ENCODE measurements at regions of chr1 and their contacts with region 1.

Region 1: DNA sequence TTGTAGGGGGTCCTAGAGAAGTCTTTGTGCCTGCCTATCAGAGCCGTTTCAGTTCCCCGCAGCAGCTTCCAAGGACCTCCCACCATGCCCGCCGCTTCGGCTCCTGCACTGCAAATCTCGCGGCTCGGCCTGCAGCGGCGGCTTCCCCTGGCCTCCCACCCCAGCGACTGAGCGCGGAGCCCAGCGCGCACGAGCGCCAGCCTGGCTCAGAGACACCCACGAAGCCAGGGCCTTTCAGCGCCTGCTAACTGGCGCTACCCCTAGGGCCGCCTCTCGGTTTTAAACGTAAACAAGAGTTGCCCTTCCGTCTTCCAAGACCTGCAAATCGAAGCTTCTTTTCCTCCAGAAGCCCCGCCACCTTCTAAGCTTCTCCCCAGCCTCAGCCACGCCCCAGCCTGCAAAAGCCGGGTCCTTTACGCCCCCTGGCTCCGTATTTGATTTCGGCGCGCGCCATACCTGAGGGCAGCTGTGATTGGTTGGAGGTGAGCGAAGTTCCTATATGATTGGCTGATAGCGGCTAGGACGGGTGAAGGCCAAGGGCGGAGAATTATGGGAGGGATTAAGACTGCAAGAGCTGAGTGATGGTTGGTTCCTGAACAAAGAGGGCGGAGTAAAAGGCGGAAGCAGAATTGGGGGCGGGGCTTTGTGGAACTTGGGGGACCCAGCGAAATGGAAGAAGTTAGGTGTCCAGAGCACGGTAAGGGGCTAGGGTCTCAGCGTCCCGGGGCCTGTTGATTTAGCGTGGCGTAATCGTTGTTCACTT is at the start of gene TTF2:
- DNase-seq: peak; percentile 99
- ATAC-seq: peak; percentile 96
- H3K4me3 ChIP-seq: peak within 1 kb of the TSS; percentile 90 to 95
- H3K27ac ChIP-seq: peak within 1 kb of the TSS; percentile 85
- H3K4me1 ChIP-seq: peaks cover 4 to 15% of the 10 kb centered on the region in 2 experiments; a peak in 3 of 4 replicates
- H3K27me3 ChIP-seq: no peaks in the 10 kb centered on the region
- CTCF ChIP-seq: no peak
- POLR2A ChIP-seq: peak; percentile 62
- RAD21 ChIP-seq: no peak
- total RNA-seq, gene TTF2: 60.3 TPM

Region 2: GRCh38 chr1:116151739-116152576 is 907.9 kb before region 1 on chr1:
- CTCF ChIA-PET with region 1: no interaction called
- POLR2A ChIA-PET with region 1: no interaction called
- RAD21 ChIA-PET with region 1: no interaction called
- intact Hi-C with region 1: loop called (anchors 10 kb)
- DNase-seq: peak; percentile 26
- ATAC-seq: peak; percentile 98
- H3K4me3 ChIP-seq: peak overlapping the region; percentile 45 to 59
- H3K27ac ChIP-seq: peak overlapping the region; percentile 58; the same call in 1 of the 2 replicates
- H3K4me1 ChIP-seq: peaks cover 0 to 13% of the 10 kb centered on the region in 2 experiments; a peak in 2 of 4 replicates
- H3K27me3 ChIP-seq: no peaks in the 10 kb centered on the region
- CTCF ChIP-seq: peak; percentile 73 to 91 (median 89)
- POLR2A ChIP-seq: peak; percentile 25
- RAD21 ChIP-seq: peak; percentile 85

Region 3: DNA sequence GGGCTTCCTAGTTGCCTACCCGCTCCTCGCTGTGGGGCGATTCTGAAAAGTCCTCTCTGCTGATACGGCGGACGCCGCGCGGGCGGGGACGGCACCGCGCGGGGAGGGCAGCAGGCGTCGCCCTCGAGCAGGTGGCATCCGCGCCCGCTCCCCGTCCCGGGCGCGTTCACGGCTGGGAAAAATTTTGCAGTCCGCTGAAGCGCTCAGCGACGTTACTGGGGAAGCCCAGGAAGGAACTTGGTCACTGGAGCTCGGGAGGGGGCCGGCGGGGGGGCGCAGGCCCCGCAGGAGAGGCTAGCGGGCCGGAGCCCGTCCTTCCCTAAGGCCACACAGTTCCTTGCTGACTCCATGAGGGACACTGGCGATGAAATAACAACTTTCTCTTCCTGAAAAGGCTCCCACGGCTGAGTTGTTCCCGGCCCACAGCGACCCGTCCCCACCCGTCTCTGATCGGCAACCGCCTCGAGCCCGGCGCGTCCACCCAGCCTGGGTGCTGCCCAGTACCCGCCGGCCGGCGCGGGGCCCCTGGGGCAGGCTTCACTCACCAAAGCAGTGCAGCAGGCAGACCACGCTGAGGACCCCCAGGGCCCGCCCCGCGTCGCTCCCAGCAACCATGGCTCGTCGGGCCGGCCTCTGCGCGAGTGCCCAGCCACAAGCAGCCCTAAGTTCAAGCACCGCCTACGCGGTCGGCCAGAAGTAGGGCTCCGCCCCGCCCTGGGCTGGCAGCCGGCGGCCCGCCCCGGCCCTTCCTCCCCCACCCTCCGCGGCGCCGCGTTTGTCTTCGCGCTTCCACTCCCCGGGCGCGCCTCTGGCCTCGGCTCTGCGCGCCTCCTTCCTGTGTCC is 489.3 kb before region 1 on chr1 and contains the start of gene CD58:
- CTCF ChIA-PET with region 1: interaction called, 5 read pairs
- POLR2A ChIA-PET with region 1: no interaction called
- RAD21 ChIA-PET with region 1: no interaction called
- intact Hi-C with region 1: loop called (anchors 1 kb)
- DNase-seq: peak; percentile 57
- ATAC-seq: peak; percentile 90
- H3K4me3 ChIP-seq: peak within 1 kb of the TSS; percentile 75 to 88
- H3K27ac ChIP-seq: peak within 1 kb of the TSS; percentile 93
- H3K4me1 ChIP-seq: peaks cover 21 to 40% of the 10 kb centered on the region in 2 experiments
- H3K27me3 ChIP-seq: no peaks in the 10 kb centered on the region
- CTCF ChIP-seq: peak; percentile 45 to 65 (median 55); a peak in 5 of 6 replicates
- POLR2A ChIP-seq: peak; percentile 24
- RAD21 ChIP-seq: peak; percentile 49
- total RNA-seq, gene CD58: 18.0 TPM

Region 4: GRCh38 chr1:116724765-116725375 is 335.0 kb before region 1 on chr1:
- CTCF ChIA-PET with region 1: interaction called, 6 read pairs
- POLR2A ChIA-PET with region 1: no interaction called
- RAD21 ChIA-PET with region 1: no interaction called
- intact Hi-C with region 1: loop called (anchors 5 kb)
- DNase-seq: peak; percentile 38
- ATAC-seq: peak; percentile 83
- H3K4me3 ChIP-seq: no peak overlapping the region
- H3K27ac ChIP-seq: no peak overlapping the region
- H3K4me1 ChIP-seq: no peaks in the 10 kb centered on the region
- H3K27me3 ChIP-seq: 0 out of 2 replicates have a peak, but pooled peaks cover 3% of the 10 kb centered on the region
- CTCF ChIP-seq: peak; percentile 50 to 89 (median 68); a peak in 5 of 6 replicates
- POLR2A ChIP-seq: no peak
- RAD21 ChIP-seq: peak; percentile 63

Region 5: DNA sequence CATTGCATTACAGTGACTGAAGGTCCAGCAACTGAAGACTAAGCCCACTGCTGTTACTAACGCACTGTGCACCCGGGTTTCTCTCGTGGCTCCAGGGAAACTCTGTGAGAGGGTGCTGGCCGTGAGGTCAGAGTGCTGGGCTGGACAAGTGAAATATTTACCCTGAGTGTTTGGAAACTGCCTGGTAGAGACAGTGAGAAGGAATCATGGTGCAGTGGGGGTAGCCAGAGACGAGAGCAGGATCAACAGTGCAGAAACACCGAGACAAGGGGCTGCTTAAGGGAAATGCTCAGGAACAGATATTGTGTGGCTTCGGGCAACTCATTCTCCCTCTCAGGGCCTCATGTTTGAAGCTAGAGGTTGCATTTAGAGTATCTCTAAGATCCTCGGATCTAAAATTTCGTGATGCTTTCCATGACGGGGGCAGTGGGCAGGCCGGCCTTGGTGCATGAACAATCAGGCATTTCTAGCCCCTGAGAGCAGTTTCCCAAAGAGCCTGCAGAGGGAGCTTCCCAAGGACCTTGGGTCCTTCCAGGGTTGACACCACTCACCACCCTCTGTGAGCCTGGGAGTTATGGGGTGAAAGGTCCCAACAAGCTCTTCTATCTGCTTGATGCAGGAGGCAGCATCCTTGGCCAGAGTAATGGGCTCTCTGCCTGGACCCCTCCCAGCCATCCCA is 295.9 kb before region 1 on chr1:
- CTCF ChIA-PET with region 1: interaction called, 3 read pairs
- POLR2A ChIA-PET with region 1: no interaction called
- RAD21 ChIA-PET with region 1: no interaction called
- intact Hi-C with region 1: loop called (anchors 1 kb)
- DNase-seq: peak; percentile 15
- ATAC-seq: peak; percentile 94
- H3K4me3 ChIP-seq: no peak overlapping the region
- H3K27ac ChIP-seq: no peak overlapping the region
- H3K4me1 ChIP-seq: no peaks in the 10 kb centered on the region
- H3K27me3 ChIP-seq: no peaks in the 10 kb centered on the region
- CTCF ChIP-seq: peak; percentile 39 to 75 (median 59); a peak in 4 of 6 replicates
- POLR2A ChIP-seq: no peak
- RAD21 ChIP-seq: peak; percentile 37

Region 6: DNA sequence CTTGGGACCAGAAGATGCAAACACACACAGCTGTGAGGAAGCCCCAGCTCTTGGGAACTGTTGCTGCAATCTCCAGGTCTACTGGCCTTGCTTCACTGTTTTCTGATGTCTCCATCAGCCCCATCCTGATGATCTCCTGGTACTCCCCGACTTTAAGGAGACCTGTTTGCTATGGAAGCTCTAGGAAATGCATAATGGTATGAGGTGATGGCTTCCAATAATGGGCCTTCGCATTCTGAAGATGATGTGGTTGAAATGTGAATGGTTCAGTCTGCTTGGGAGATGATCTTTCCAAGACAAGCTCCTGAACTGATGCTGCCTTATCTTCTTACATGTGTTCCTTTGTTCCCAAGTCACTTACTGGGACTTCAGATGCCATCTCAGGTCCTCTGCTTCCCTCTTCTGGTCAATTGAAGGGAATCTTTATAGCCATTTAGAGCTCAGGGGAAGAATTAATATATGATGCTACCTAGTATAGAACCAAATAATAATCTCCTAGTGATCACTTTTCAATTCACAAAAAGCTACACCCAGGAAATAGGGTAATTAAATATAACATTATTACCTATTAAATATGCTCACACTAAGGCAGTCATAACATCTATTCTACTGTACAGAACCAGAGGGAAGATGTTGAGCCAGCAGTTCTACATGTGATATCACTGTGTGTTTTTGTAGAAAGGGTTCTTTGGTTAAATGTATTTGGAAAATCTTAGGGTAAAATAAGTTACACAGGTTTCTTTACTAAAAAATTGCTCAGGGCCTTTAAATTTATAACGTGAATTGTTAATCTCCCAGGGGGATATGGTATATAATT is 224.7 kb after region 1 on chr1:
- CTCF ChIA-PET with region 1: interaction called, 101 read pairs
- POLR2A ChIA-PET with region 1: no interaction called
- RAD21 ChIA-PET with region 1: no interaction called
- intact Hi-C with region 1: no loop called
- DNase-seq: peak; percentile 57
- ATAC-seq: peak; percentile 94
- H3K4me3 ChIP-seq: no peak overlapping the region
- H3K27ac ChIP-seq: no peak overlapping the region
- H3K4me1 ChIP-seq: no peaks in the 10 kb centered on the region
- H3K27me3 ChIP-seq: no peaks in the 10 kb centered on the region
- CTCF ChIP-seq: peak; percentile 55 to 75 (median 73); a peak in 5 of 6 replicates
- POLR2A ChIP-seq: no peak
- RAD21 ChIP-seq: peak; percentile 94